OCI-LY7 (cell line): ENCODE measurements at regions of chr18 and their contacts with region 1.

Region 1: DNA sequence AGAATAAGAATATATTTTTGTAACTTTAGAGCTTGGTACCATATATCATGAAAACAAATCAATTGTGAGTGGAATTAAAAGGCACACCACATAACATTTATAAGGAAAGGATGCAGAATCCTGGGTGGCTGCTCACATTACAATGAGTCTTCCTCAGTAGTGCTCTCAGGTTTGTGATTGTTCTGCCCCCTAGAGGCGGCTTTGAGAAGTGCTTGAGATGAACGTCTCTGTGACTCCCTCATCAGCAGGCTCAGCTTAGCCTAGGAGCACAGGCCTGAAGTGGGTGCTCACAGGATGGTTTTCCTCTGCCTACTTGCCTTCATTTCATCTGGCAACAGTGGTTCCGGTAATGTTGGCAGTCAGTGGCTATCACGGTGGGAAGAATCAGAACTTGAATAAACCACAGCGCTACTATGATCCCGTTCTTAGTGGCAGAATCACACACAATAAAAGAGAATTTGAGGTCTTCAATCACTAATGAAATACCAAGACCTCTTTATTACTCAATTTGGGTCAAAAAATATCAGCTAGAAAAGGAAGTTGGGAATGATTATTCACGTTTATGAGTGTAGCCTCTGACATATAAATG is 38.1 kb upstream of the B4GALT6 start:
- DNase-seq: peak; percentile 69
- H3K4me3 ChIP-seq: no peak overlapping the region
- H3K27ac ChIP-seq: no peak overlapping the region
- H3K4me1 ChIP-seq: no peaks in the 10 kb centered on the region
- CTCF ChIP-seq: peak; percentile 80

Region 2: DNA sequence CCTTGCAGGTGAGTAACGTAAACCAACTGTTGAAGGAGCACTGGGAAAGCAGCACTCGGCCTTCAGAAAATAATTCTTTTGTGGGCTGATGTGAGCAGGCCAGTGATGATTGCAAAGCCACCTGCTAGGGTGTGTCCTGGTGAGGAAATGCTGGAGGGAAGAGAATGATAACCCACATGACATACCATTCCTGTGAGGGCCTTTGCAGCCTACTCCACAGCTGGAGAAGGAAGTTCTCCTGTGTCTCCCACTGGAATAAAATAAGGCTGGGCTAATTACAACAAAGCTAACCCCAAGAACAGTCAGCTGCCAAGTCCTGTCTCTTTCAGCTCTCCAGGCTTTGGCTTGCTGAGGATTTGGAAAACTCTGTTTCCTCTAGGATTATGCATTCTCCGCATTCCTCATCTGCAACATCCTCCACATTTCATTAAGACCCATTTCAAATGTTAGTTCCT is 421.2 kb before region 1 on chr18:
- CTCF ChIA-PET with region 1: no interaction called
- POLR2A ChIA-PET with region 1: no interaction called
- intact Hi-C with region 1: no loop called
- DNase-seq: no peak
- H3K4me3 ChIP-seq: no peak overlapping the region
- H3K27ac ChIP-seq: no peak overlapping the region
- H3K4me1 ChIP-seq: no peaks in the 10 kb centered on the region
- CTCF ChIP-seq: no peak

Region 3: DNA sequence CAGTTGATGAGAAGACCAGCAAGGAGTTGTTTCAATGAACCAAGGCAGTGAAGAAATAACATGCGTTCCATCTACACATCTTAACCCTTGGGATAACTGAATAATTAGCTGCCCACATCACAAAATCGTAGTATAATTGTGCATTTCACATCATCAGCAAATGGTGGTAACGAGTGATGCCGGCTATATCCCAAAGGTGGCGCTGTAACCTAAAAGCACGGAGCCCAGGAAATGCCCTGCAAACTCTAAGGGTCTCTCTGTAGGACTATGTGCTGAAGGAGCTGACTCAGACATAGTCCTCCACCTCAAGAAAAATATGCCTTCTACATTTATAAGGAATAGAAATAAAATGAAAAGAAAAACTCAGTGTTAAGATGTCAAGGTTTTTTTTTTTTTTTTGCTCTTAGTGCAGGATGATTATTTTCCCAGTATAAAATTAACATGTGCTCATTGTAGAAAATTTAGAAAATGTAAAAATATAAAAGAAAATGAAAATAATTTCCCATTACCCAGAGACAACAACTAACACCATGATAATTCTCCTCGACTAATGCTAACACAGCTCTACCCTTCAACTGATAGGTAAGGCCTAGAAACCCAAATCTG is 298.0 kb before region 1 on chr18:
- CTCF ChIA-PET with region 1: no interaction called
- POLR2A ChIA-PET with region 1: no interaction called
- intact Hi-C with region 1: loop called (anchors 10 kb)
- DNase-seq: peak; percentile 26
- H3K4me3 ChIP-seq: no peak overlapping the region
- H3K27ac ChIP-seq: no peak overlapping the region
- H3K4me1 ChIP-seq: no peaks in the 10 kb centered on the region
- CTCF ChIP-seq: peak; percentile 83

Region 4: GRCh38 chr18:31667185-31667584 is 55.3 kb before region 1 on chr18:
- CTCF ChIA-PET with region 1: no interaction called
- POLR2A ChIA-PET with region 1: no interaction called
- intact Hi-C with region 1: no loop called
- DNase-seq: no peak
- H3K4me3 ChIP-seq: no peak overlapping the region
- H3K27ac ChIP-seq: no peak overlapping the region
- H3K4me1 ChIP-seq: no peaks in the 10 kb centered on the region
- CTCF ChIP-seq: no peak